SK-N-SH (cell line): ENCODE measurements at regions of chrX and their contacts with region 1.

Region 1: GRCh38 chrX:133005066-133005465 is 46.6 kb upstream of the HS6ST2 start:
- DNase-seq: peak; percentile 39
- H3K4me3 ChIP-seq: no peak overlapping the region; a peak in 1 of 4 replicates
- H3K27ac ChIP-seq: no peak overlapping the region; a peak in 1 of 4 replicates
- H3K4me1 ChIP-seq: peaks cover 0 to 2% of the 10 kb centered on the region in 2 experiments; a peak in 1 of 4 replicates
- H3K27me3 ChIP-seq: no peaks in the 10 kb centered on the region; the same call in 1 of the 2 replicates
- CTCF ChIP-seq: peak; percentile 67
- EP300 ChIP-seq: no peak
- RAD21 ChIP-seq: peak; percentile 71

Region 2: DNA sequence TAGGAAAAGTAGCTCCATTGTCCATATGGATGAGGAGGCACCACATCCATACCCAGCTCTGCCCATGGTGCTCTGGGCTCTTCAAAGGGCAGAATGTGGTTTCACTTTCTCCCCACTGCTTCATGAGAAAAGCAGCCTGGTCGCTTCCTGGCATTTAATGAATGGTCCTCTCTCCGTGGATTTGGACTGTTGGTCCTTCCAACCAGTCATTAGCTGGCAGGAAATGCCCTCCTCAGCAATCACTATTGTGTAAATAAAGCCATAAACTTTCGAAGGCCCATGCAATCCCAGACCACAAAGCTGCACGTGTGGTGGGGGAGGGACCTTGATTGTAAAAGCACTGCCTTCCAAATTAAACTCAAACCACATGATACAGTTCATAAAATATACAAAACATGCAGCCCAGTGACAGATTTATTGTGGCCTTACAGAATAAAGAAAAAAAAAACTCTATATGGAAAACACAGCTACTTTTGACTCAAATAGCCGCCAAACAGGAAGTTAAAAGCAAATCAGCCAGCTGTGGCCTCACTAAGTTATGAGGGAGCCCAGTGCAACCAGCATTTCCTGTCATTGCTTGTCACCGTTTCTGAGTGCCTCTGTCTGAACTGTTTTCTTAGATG is 524.4 kb before region 1 on chrX:
- CTCF ChIA-PET with region 1: no interaction called
- POLR2A ChIA-PET with region 1: no interaction called
- DNase-seq: no peak
- H3K4me3 ChIP-seq: peak overlapping the region in 1 of 2 experiments; percentile 28; a peak in 2 of 4 replicates
- H3K27ac ChIP-seq: peak overlapping the region in 1 of 2 experiments; percentile 39; a peak in 2 of 4 replicates
- H3K4me1 ChIP-seq: peaks cover 0 to 4% of the 10 kb centered on the region in 2 experiments; a peak in 2 of 4 replicates
- H3K27me3 ChIP-seq: no peaks in the 10 kb centered on the region; the same call in 1 of the 2 replicates
- CTCF ChIP-seq: no peak
- EP300 ChIP-seq: no peak
- RAD21 ChIP-seq: no peak

Region 3: GRCh38 chrX:132924426-132924825 is 80.6 kb before region 1 on chrX:
- CTCF ChIA-PET with region 1: no interaction called
- POLR2A ChIA-PET with region 1: no interaction called
- DNase-seq: no peak
- H3K4me3 ChIP-seq: no peak overlapping the region
- H3K27ac ChIP-seq: no peak overlapping the region
- H3K4me1 ChIP-seq: no peaks in the 10 kb centered on the region
- H3K27me3 ChIP-seq: no peaks in the 10 kb centered on the region; the same call in 1 of the 2 replicates
- CTCF ChIP-seq: no peak
- EP300 ChIP-seq: no peak
- RAD21 ChIP-seq: no peak

Region 4: GRCh38 chrX:132968296-132968949 is 36.6 kb before region 1 on chrX:
- CTCF ChIA-PET with region 1: interaction called, 13 read pairs
- POLR2A ChIA-PET with region 1: no interaction called
- DNase-seq: no peak
- H3K4me3 ChIP-seq: no peak overlapping the region
- H3K27ac ChIP-seq: no peak overlapping the region; a peak in 1 of 4 replicates
- H3K4me1 ChIP-seq: peaks cover 0 to 13% of the 10 kb centered on the region in 2 experiments; a peak in 2 of 4 replicates
- H3K27me3 ChIP-seq: no peaks in the 10 kb centered on the region; the same call in 1 of the 2 replicates
- CTCF ChIP-seq: no peak
- EP300 ChIP-seq: no peak
- RAD21 ChIP-seq: no peak

Region 5: DNA sequence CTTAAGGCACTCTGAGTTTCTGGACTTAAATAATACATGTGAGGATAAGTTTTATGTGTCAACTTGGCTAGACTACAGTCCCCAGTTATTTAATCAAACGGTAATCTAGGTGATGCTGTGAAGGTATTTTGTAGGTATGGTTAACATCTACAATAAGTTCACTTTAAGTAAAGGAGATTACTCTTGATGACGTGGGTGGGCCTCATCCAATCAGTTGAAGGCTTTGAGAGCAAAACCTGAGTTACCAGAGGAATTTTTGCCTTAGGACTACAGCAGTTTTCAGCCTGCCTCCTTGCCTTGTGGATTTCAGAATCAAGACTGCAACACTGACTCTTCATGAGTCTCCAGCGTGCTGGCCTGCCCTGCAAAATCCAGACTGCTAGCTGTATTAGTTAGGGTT is 13.2 kb after region 1 on chrX:
- CTCF ChIA-PET with region 1: interaction called, 14 read pairs
- POLR2A ChIA-PET with region 1: no interaction called
- DNase-seq: no peak
- H3K4me3 ChIP-seq: no peak overlapping the region
- H3K27ac ChIP-seq: no peak overlapping the region
- H3K4me1 ChIP-seq: no peaks in the 10 kb centered on the region; a peak in 1 of 4 replicates
- H3K27me3 ChIP-seq: no peaks in the 10 kb centered on the region
- CTCF ChIP-seq: no peak
- EP300 ChIP-seq: no peak
- RAD21 ChIP-seq: no peak

Region 6: DNA sequence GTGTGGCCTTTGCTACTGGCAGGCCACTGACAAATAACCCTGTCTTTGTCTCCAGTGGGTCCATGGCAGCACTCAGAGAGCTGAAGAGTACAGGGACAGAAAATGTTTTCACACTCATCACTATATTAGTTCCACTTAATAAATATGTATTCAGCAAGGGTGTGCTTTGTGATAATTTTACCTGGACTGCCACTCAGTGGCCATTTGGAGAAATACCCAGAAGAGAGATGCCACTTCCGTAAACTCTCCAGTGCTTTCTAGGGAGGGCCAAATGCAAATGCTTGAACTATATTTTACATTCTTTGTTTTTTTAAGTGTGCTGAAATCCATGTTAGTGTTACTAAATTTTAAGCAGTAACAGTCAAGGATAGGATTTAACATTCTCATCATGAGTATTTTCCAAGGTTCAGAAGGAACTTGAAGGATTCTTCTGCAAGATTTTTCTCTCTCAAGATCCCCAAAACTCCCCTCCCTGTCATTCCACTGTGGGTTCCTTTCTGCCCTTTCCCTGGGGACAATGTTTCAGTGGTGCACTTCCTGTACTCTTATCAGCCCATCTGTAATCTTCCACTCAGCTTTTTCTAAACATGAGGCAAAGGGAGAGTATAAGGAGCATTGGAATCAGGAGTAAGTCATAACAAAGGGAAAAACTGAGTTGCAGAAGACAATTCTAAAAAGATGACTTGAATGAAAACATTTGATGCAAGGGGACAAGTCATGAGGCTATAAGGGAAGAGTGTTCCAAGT is 167.1 kb after region 1 on chrX:
- CTCF ChIA-PET with region 1: interaction called, 13 read pairs
- POLR2A ChIA-PET with region 1: no interaction called
- DNase-seq: peak; percentile 24
- H3K4me3 ChIP-seq: no peak overlapping the region
- H3K27ac ChIP-seq: no peak overlapping the region
- H3K4me1 ChIP-seq: peaks cover 0 to 4% of the 10 kb centered on the region in 2 experiments; a peak in 2 of 4 replicates
- H3K27me3 ChIP-seq: no peaks in the 10 kb centered on the region
- CTCF ChIP-seq: peak; percentile 44
- EP300 ChIP-seq: no peak
- RAD21 ChIP-seq: peak; percentile 79